SK-N-SH (cell line): ENCODE measurements at regions of chr3 and their contacts with region 1.

Region 1: DNA sequence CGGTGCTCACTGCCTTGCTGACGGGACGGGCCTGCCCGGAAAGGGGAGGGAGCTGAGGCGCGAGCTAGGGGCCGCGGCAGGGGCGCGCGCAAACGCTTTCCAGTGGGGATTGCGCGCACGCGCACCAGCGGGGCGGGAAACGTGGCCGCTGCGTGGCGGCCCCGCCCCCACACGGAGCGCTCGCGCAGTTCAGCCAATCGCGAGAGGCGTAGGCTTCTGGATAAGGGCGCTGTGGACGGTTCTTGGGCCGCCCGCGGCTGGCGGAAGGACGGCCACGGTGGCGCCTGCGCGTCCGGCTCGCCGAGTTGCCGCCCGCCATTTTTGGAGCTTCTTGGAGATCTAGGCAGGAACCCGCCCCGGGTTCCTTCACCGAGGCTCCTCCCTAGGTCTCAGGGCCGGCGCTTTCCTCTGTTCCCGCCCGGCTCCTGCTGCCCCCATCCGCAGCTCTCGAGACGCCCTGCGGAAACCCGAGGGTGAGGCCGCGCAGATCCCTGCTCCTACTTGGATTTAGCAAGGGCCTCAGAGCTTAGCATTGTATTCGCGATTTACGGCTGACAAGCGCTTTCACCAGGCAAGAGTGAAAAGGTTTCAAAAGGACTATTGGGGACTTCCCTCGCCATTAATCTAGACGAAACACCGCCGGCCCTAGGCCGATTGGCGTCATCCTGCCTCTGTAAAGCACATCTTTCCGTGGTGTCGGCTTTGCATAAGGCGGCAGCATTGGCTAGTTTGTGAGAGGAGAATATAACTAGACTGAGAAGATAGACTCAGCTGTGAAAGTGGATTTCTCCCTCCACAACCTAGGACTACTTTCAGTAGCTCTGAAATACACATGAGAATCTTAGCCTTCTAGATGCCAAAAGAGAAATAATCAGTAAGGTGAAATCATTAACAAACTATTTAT is 496 bp upstream of the STAG1 start:
- DNase-seq: peak; percentile 96
- H3K4me3 ChIP-seq: peak overlapping the region; percentile 66 to 69
- H3K27ac ChIP-seq: peak overlapping the region; percentile 98
- H3K4me1 ChIP-seq: peaks cover 17 to 24% of the 10 kb centered on the region in 2 experiments; a peak in 3 of 4 replicates
- H3K27me3 ChIP-seq: no peaks in the 10 kb centered on the region
- CTCF ChIP-seq: peak; percentile 38
- EP300 ChIP-seq: peak in 1 of 2 experiments; percentile 9; a peak in 1 of 4 replicates
- RAD21 ChIP-seq: peak; percentile 59

Region 2: DNA sequence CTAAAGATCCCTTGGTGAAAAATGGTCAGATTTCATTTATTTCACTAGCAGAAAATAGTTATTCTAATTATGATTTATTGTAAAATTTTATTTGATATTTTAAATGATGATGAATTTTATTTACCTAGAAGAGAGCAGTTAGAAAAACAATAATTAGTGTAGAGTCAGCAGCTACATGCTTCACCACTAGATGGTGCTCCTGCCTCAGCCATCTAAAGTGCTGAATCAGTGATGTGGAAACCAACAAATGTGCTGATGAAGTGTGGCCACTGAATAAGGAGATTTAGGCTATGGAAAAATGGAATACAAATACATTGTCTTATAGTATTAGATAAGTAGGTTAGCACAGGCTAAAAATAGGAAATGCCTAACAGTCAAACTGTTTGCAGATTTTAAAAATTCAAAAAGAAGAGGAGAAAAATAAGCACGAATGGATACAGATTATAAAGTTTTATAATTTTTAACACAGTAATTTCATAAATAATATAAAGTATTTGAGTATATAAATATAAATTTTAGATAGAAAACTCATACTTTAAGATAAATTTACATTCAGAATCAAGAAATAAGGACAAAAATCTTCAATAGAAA is 677.4 kb before region 1 on chr3:
- CTCF ChIA-PET with region 1: interaction called, 36 read pairs
- POLR2A ChIA-PET with region 1: interaction called, 3 read pairs
- DNase-seq: peak; percentile 53
- H3K4me3 ChIP-seq: no peak overlapping the region
- H3K27ac ChIP-seq: peak overlapping the region in 1 of 2 experiments; percentile 66; a peak in 2 of 4 replicates
- H3K4me1 ChIP-seq: peaks cover 7 to 10% of the 10 kb centered on the region in 2 experiments
- H3K27me3 ChIP-seq: no peaks in the 10 kb centered on the region
- CTCF ChIP-seq: peak; percentile 93
- EP300 ChIP-seq: no peak
- RAD21 ChIP-seq: peak; percentile 99

Region 3: GRCh38 chr3:136250226-136250902 is 502.3 kb before region 1 on chr3 and contains the start of gene PCCB:
- CTCF ChIA-PET with region 1: interaction called, 9 read pairs
- POLR2A ChIA-PET with region 1: interaction called, 10 read pairs
- DNase-seq: peak; percentile 93
- H3K4me3 ChIP-seq: peak within 1 kb of the TSS; percentile 66 to 76
- H3K27ac ChIP-seq: peak within 1 kb of the TSS; percentile 90 to 94
- H3K4me1 ChIP-seq: peaks cover 0 to 9% of the 10 kb centered on the region in 2 experiments; a peak in 1 of 4 replicates
- H3K27me3 ChIP-seq: no peaks in the 10 kb centered on the region
- CTCF ChIP-seq: peak; percentile 59
- EP300 ChIP-seq: no peak
- RAD21 ChIP-seq: peak; percentile 33
- polyA plus RNA-seq, gene PCCB: 67.5 and 79.8 TPM in 2 replicates

Region 4: DNA sequence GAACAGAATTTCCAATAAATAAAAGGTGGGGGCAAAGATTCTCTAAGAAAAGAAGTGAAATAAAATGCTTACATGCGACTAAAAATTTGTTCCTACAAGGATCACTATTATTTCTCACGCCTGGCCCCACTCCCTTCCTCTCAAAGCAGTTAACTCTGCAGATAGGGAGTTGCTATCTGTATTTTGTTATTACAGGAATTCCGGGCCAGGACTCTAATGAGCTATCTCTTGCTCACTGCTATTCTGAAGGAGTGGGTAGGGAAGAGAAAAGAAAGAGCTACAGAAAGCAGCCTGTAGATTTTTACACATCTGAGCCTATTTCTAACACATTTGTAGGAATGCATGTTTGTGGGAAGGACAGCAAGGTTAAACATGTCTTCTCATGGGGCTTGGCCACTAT is 362.1 kb before region 1 on chr3:
- CTCF ChIA-PET with region 1: interaction called, 127 read pairs
- POLR2A ChIA-PET with region 1: interaction called, 33 read pairs
- DNase-seq: no peak
- H3K4me3 ChIP-seq: no peak overlapping the region
- H3K27ac ChIP-seq: no peak overlapping the region
- H3K4me1 ChIP-seq: no peaks in the 10 kb centered on the region
- H3K27me3 ChIP-seq: no peaks in the 10 kb centered on the region
- CTCF ChIP-seq: no peak
- EP300 ChIP-seq: no peak
- RAD21 ChIP-seq: no peak

Region 5: GRCh38 chr3:136545664-136546268 is 206.9 kb before region 1 on chr3:
- CTCF ChIA-PET with region 1: interaction called, 24 read pairs
- POLR2A ChIA-PET with region 1: interaction called, 8 read pairs
- DNase-seq: no peak
- H3K4me3 ChIP-seq: no peak overlapping the region
- H3K27ac ChIP-seq: no peak overlapping the region
- H3K4me1 ChIP-seq: peaks cover 0 to 12% of the 10 kb centered on the region in 2 experiments; a peak in 1 of 4 replicates
- H3K27me3 ChIP-seq: no peaks in the 10 kb centered on the region
- CTCF ChIP-seq: peak; percentile 45
- EP300 ChIP-seq: no peak
- RAD21 ChIP-seq: peak; percentile 63

Region 6: DNA sequence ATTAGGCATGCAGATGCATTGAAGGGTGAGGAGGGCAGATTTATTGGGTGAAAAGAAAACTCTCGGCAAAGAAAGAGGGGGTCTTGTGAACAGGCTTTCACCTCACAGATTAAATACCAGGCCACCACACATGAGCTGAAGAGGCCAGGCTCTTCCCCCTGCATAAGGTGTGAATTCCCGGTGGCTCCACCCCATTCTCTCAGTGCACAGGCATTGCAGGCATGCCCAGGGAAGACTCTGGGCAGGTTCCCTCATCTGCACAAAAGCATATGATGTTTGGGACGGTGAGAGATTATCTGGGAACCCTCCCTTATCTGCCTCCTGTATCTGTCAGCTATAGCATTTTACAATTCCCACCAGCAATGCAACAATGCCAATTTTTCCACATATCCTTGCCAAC is 59.0 kb after region 1 on chr3:
- CTCF ChIA-PET with region 1: no interaction called
- POLR2A ChIA-PET with region 1: no interaction called
- DNase-seq: no peak
- H3K4me3 ChIP-seq: no peak overlapping the region
- H3K27ac ChIP-seq: no peak overlapping the region
- H3K4me1 ChIP-seq: no peaks in the 10 kb centered on the region
- H3K27me3 ChIP-seq: no peaks in the 10 kb centered on the region
- CTCF ChIP-seq: no peak
- EP300 ChIP-seq: no peak
- RAD21 ChIP-seq: no peak

Region 7: GRCh38 chr3:136861890-136862616 is 109.4 kb after region 1 on chr3 and contains the start of gene NCK1:
- CTCF ChIA-PET with region 1: interaction called, 19 read pairs
- POLR2A ChIA-PET with region 1: interaction called, 21 read pairs
- DNase-seq: peak; percentile 95
- H3K4me3 ChIP-seq: peak within 1 kb of the TSS; percentile 71 to 84
- H3K27ac ChIP-seq: peak within 1 kb of the TSS; percentile 83 to 90
- H3K4me1 ChIP-seq: peaks cover 5 to 6% of the 10 kb centered on the region in 2 experiments; a peak in 3 of 4 replicates
- H3K27me3 ChIP-seq: no peaks in the 10 kb centered on the region
- CTCF ChIP-seq: peak; percentile 28; the same call in 1 of the 2 replicates
- EP300 ChIP-seq: no peak
- RAD21 ChIP-seq: no peak
- polyA plus RNA-seq, gene NCK1: 16.2 and 17.5 TPM in 2 replicates

Region 8: GRCh38 chr3:137020315-137020714 is 267.6 kb after region 1 on chr3:
- CTCF ChIA-PET with region 1: interaction called, 11 read pairs
- POLR2A ChIA-PET with region 1: interaction called, 23 read pairs
- DNase-seq: no peak
- H3K4me3 ChIP-seq: no peak overlapping the region
- H3K27ac ChIP-seq: no peak overlapping the region
- H3K4me1 ChIP-seq: no peaks in the 10 kb centered on the region
- H3K27me3 ChIP-seq: no peaks in the 10 kb centered on the region; the same call in 1 of the 2 replicates
- CTCF ChIP-seq: no peak
- EP300 ChIP-seq: no peak
- RAD21 ChIP-seq: no peak